Common myeloid progenitor, CD34-positive (primary cell): ENCODE measurements at regions of chr20 and their contacts with region 1.

Region 1: GRCh38 chr20:38805502-38805957 is at the start of gene PPP1R16B:
- DNase-seq: peak; percentile 80 to 88 (median 88)
- H3K4me3 ChIP-seq: peak within 1 kb of the TSS; percentile 71 to 92 (median 81)
- H3K27ac ChIP-seq: peak within 1 kb of the TSS; percentile 98
- H3K4me1 ChIP-seq: peaks cover 18 to 57% (median 44%) of the 10 kb centered on the region in 4 experiments
- H3K27me3 ChIP-seq: peaks cover 0 to 2% (median 0%) of the 10 kb centered on the region in 5 experiments

Region 2: GRCh38 chr20:38790200-38791053 is 15.1 kb before region 1 on chr20:
- CTCF ChIA-PET with region 1: interaction called, 26 read pairs
- POLR2A ChIA-PET with region 1: interaction called, 13 read pairs
- DNase-seq: peak; percentile 74 to 84 (median 81)
- H3K4me3 ChIP-seq: no peak overlapping the region
- H3K27ac ChIP-seq: no peak overlapping the region
- H3K4me1 ChIP-seq: peaks cover 0 to 13% (median 6%) of the 10 kb centered on the region in 4 experiments
- H3K27me3 ChIP-seq: no peaks in the 10 kb centered on the region